ENCODE measurements at regions of chr17 and their contacts with region 1.

Region 1: DNA sequence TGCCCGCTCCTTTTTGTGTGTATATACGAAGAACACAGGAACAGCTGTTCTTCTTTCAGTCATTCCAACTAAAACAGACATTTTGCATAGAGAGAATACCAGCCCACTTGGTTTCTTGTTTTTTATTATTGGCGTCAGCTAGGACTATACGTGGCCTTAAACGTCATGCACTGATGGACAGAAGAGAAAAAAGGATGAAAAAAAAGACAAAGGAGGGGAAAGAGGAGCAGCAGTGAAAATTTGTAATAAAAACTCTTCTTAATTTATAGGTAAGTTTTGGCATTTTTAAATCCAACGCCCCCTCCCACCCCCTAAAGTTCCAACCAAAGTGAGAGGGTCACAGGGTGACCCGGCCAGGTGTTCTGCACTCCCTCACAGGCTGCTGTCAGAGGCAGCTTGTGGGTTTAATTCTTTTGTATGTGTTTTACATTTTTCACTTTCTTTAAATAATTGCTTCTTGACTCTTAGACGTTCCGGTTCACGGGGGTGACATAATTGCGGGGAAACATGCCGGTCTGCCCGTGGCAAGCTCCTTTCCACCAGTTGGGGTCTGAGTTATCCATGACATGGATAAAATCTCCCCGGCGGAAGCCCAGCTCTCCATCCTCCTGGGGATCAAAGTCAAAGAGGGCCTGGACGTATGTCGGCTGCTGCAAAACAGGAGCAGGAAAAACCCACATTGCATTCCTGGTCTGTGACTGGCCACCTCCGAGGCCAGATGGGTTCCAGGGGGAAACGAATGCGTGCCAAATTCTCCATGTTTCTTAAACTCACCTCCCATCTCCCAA is 30.9 kb upstream of the SLC25A19 start:
- DNase-seq: peak; percentile 56
- H3K4me3 ChIP-seq: no peak overlapping the region
- H3K27ac ChIP-seq: peak overlapping the region in 7 of 8 donors; percentile 44 to 90 (median 70)
- H3K4me1 ChIP-seq: peaks cover 5 to 90% (median 51%) of the 10 kb centered on the region in 6 donors
- H3K27me3 ChIP-seq: no peaks in the 10 kb centered on the region
- CTCF ChIP-seq: no peak
- POLR2A ChIP-seq: no peak

Region 2: DNA sequence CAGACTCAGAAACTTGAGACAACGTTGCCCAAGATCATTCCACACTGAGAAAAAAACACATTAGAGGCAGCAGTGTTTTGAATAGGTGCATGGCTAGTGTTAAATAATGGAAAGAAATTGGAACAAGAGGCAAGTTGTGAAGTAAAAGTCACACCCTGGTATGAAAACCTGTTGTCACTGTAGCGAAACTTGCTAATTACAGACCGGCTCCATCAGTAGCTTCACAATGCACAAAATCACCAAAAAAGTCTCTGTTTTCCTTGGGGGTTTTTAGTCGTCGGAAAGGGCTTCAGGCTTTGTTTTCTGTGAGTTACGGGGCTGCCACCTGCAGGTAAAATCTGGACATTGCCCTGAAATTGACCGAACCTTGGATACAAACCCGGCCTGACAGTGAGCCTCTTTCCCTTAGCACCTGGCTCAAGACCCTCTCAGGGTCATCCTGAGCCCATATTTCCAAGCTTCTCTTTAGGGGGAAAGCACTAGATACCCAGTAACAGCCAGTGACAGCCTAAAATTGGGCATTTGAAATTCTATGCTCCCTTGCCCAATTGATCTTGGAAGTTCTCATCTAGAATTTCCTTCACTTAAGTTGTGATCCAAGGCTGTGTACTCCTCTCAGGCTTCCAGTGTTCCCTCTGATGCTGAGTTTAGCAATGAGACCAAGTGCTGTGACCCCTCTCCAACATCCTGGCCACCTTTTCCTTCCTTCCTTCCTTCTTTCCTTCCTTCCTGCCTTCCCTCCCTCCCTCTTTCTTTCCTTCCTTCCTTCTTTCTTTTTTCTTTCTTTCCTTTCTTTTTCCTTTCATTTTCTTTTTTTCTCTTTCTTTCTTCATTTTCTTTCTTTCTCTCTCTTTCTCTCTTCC is 92.6 kb after region 1 on chr17:
- intact Hi-C with region 1: loop called (anchors 2 kb)
- DNase-seq: no peak
- H3K4me3 ChIP-seq: peak overlapping the region in 1 of 8 donors; percentile 47
- H3K27ac ChIP-seq: peak overlapping the region in 1 of 8 donors; percentile 17
- H3K4me1 ChIP-seq: peaks cover 3 to 29% (median 9%) of the 10 kb centered on the region in 6 donors
- H3K27me3 ChIP-seq: no peaks in the 10 kb centered on the region
- CTCF ChIP-seq: peak; percentile 71 to 89 (median 84)
- POLR2A ChIP-seq: no peak

Region 3: DNA sequence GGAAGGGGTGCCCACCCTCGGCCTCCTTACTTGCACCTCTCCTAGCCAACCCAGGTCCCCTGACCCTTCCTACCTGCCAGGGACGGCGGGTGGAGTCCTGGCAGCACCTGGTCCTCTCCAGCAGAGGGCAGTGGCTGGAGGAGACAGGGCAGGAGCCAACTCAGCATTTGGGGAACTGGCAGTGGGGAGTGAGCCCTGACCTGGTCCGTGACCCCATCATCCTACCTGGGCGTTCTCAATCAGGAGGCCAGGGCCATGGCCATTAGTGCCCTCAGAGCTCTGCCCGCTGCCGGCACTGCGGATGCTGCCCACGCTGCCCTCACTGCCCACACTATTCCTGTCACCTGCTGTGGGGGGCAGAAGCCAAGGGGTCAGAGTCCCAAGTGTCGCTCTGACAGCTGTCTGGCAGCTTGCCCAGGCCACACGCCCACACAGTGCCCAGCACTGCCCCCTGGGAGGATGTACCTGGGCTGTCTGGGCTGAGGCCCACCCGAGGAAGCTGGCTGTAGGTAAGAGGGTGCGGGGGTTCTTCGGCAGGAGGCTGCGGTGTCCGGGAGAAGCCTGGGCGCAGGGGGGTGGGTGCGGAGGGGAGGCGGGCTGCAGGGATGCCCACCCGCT is 184.4 kb after region 1 on chr17:
- intact Hi-C with region 1: no loop called
- DNase-seq: peak; percentile 85
- H3K4me3 ChIP-seq: peak overlapping the region in 1 of 8 donors; percentile 11
- H3K27ac ChIP-seq: peak overlapping the region in 5 of 8 donors; percentile 23 to 90 (median 82)
- H3K4me1 ChIP-seq: peaks cover 0 to 100% (median 63%) of the 10 kb centered on the region in 6 donors
- H3K27me3 ChIP-seq: no peaks in the 10 kb centered on the region
- CTCF ChIP-seq: peak; percentile 46 to 79 (median 71)
- POLR2A ChIP-seq: no peak

Measured in spleen (tissue), 13 donors.